ENCODE measurements at regions of chr5 and their contacts with region 1.

Region 1: GRCh38 chr5:145246961-145247744 is 588.0 kb downstream of the PRELID2 start:
- DNase-seq: peak; percentile 46
- H3K4me3 ChIP-seq: no peak overlapping the region
- H3K27ac ChIP-seq: peak overlapping the region; percentile 97
- H3K4me1 ChIP-seq: peaks cover 65% of the 10 kb centered on the region
- H3K27me3 ChIP-seq: no peaks in the 10 kb centered on the region
- CTCF ChIP-seq: no peak

Region 2: GRCh38 chr5:145521066-145521465 is 273.9 kb after region 1 on chr5:
- CTCF ChIA-PET with region 1: no interaction called
- POLR2A ChIA-PET with region 1: no interaction called
- intact Hi-C with region 1: loop called (anchors 5 kb)
- DNase-seq: peak; percentile 95
- H3K4me3 ChIP-seq: no peak overlapping the region
- H3K27ac ChIP-seq: no peak overlapping the region
- H3K4me1 ChIP-seq: peaks cover 32% of the 10 kb centered on the region
- H3K27me3 ChIP-seq: no peaks in the 10 kb centered on the region
- CTCF ChIP-seq: no peak

Region 3: DNA sequence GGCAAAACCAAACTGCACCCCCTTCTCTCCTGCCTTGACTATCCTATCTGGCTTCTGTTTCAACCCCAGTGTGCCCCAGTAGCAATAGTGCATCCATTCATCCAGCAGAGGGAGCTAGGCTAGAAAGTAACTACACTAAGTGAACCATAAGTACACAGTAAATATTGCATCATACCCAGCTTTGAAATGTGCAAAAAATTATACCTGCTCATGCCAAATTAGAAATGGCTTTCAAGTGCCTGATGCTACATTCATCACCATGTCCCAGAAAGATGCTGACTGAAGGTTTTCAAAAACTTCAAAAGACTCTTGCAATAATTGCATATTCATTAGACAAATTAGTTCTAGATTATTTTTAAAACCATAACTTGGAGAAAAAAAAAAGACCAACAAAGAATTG is 434.5 kb after region 1 on chr5:
- CTCF ChIA-PET with region 1: no interaction called
- POLR2A ChIA-PET with region 1: no interaction called
- intact Hi-C with region 1: loop called (anchors 10 kb)
- DNase-seq: peak; percentile 89
- H3K4me3 ChIP-seq: no peak overlapping the region
- H3K27ac ChIP-seq: no peak overlapping the region
- H3K4me1 ChIP-seq: peaks cover 26% of the 10 kb centered on the region
- H3K27me3 ChIP-seq: no peaks in the 10 kb centered on the region
- CTCF ChIP-seq: peak; percentile 89

Region 4: GRCh38 chr5:145936401-145937131 is 689.4 kb after region 1 on chr5 and contains the start of gene SH3RF2:
- CTCF ChIA-PET with region 1: no interaction called
- POLR2A ChIA-PET with region 1: no interaction called
- intact Hi-C with region 1: loop called (anchors 5 kb)
- DNase-seq: peak; percentile 96
- H3K4me3 ChIP-seq: peak within 1 kb of the TSS; percentile 45
- H3K27ac ChIP-seq: peak within 1 kb of the TSS; percentile 83
- H3K4me1 ChIP-seq: peaks cover 69% of the 10 kb centered on the region
- H3K27me3 ChIP-seq: no peaks in the 10 kb centered on the region
- CTCF ChIP-seq: no peak
- total RNA-seq, gene SH3RF2: 21.1 and 22.9 TPM in 2 replicates

Region 5: DNA sequence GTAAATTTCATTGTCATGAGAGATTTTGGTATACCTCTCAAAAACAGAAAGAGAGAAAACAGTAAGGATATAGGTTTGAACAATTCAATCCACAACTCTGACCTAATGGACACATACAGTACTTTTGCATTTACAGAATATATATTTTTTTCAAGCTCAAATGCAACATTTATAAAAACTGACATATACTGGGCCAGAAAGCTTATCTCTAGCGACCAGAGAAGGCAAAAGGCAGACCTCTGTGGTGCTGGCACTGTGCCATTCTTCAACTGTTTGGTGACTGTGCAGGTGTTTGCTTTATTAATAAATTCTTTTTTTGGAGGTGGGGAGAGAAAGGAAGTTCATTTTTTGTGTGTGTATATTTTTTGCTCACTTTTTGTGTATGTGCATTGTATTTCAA is 864.3 kb after region 1 on chr5:
- CTCF ChIA-PET with region 1: no interaction called
- POLR2A ChIA-PET with region 1: no interaction called
- intact Hi-C with region 1: no loop called
- DNase-seq: no peak
- H3K4me3 ChIP-seq: no peak overlapping the region
- H3K27ac ChIP-seq: no peak overlapping the region
- H3K4me1 ChIP-seq: peaks cover 2% of the 10 kb centered on the region
- H3K27me3 ChIP-seq: no peaks in the 10 kb centered on the region
- CTCF ChIP-seq: no peak

Measured in A673 (cell line).